GM18951 (cell line): ENCODE measurements at regions of chr13 and their contacts with region 1.

Region 1: GRCh38 chr13:78978381-78978998 is 319.5 kb upstream of the OBI1 start:
- POLR2A ChIP-seq: no peak

Region 2: GRCh38 chr13:78137404-78138142 is 840.9 kb before region 1 on chr13:
- in situ Hi-C with region 1: loop called (anchors 10 kb)
- POLR2A ChIP-seq: no peak

Region 3: GRCh38 chr13:79090552-79091124 is 112.1 kb after region 1 on chr13:
- in situ Hi-C with region 1: no loop called
- POLR2A ChIP-seq: no peak

Region 4: DNA sequence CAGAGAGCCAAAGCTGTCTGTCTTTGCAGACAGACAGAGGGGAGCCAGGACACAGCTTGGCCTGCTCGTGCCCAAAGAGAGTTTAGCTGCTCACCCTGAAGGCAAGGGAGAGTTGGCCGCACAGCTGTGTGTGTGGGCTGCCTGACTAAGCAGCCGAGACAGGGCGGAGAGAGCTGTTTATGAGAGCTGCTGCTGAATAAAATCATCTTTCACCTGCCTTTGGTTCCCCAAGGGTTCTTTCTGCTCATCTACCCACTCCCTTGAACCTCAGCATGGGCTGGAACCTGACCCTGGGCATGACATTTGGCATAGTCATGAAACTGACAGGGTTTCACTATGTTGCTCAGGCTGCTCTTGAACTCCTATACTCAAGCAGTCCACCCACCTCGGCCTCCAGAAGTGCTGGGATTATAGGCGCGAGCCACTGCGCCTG is 329.4 kb after region 1 on chr13:
- in situ Hi-C with region 1: no loop called
- POLR2A ChIP-seq: no peak